ENCODE measurements at regions of chr9 and their contacts with region 1.

Region 1: GRCh38 chr9:124852829-124853531 is at the start of gene WDR38:
- DNase-seq: peak; percentile 80
- H3K4me3 Mint-ChIP-seq: peak within 1 kb of the TSS; percentile 54
- H3K27ac Mint-ChIP-seq: no peak within 1 kb of the TSS
- H3K4me1 Mint-ChIP-seq: peaks cover 6% of the 10 kb centered on the region
- H3K27me3 Mint-ChIP-seq: no peaks in the 10 kb centered on the region
- CTCF ChIP-seq: peak; percentile 99
- total RNA-seq, gene WDR38: not detected in 2 replicates

Region 2: GRCh38 chr9:124764774-124765438 is 88.1 kb before region 1 on chr9:
- CTCF ChIA-PET with region 1: interaction called, 927 read pairs
- POLR2A ChIA-PET with region 1: interaction called, 299 read pairs
- intact Hi-C with region 1: no loop called
- DNase-seq: peak; percentile 35
- H3K4me3 Mint-ChIP-seq: no peak overlapping the region
- H3K27ac Mint-ChIP-seq: no peak overlapping the region
- H3K4me1 Mint-ChIP-seq: peaks cover 11% of the 10 kb centered on the region
- H3K27me3 Mint-ChIP-seq: no peaks in the 10 kb centered on the region
- CTCF ChIP-seq: peak; percentile 37

Region 3: GRCh38 chr9:124794902-124795491 is 58.0 kb before region 1 on chr9:
- CTCF ChIA-PET with region 1: interaction called, 64 read pairs
- POLR2A ChIA-PET with region 1: interaction called, 5 read pairs
- intact Hi-C with region 1: no loop called
- DNase-seq: peak; percentile 49
- H3K4me3 Mint-ChIP-seq: no peak overlapping the region
- H3K27ac Mint-ChIP-seq: no peak overlapping the region
- H3K4me1 Mint-ChIP-seq: peaks cover 5% of the 10 kb centered on the region
- H3K27me3 Mint-ChIP-seq: no peaks in the 10 kb centered on the region
- CTCF ChIP-seq: no peak

Region 4: DNA sequence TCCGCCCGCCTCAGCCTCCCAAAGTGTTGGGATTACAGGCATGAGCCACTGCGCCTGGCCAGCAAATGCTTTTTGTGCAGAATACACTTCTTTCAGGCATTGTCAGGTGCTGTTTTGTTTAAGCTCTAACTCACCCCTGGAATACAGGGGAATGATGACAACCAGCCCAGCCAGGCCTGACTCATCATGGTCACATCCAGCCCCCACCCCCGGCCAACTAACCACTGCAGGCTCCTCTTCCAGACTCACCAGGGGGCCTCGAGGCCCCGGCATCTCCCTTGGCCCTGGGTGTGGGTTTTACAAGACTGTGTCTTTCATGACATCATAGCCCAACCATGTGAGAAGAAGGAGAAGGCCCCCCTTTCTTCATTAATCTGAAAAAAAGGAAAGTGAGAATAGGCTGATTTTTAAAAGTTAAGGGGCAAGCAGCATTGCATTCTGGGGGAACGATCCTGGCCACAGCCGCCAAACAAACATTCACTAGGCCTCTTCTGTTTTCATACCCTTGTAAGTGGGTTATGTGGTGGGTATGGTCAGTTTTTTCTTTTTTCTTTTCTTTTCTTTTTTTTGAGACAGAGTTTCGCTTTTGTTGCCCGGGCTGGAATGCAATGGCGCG is 40.5 kb before region 1 on chr9:
- CTCF ChIA-PET with region 1: interaction called, 50 read pairs
- POLR2A ChIA-PET with region 1: interaction called, 11 read pairs
- intact Hi-C with region 1: loop called (anchors 5 kb)
- DNase-seq: peak; percentile 88
- H3K4me3 Mint-ChIP-seq: no peak overlapping the region
- H3K27ac Mint-ChIP-seq: peak overlapping the region; percentile 46
- H3K4me1 Mint-ChIP-seq: peaks cover 31% of the 10 kb centered on the region
- H3K27me3 Mint-ChIP-seq: no peaks in the 10 kb centered on the region
- CTCF ChIP-seq: no peak

Region 5: DNA sequence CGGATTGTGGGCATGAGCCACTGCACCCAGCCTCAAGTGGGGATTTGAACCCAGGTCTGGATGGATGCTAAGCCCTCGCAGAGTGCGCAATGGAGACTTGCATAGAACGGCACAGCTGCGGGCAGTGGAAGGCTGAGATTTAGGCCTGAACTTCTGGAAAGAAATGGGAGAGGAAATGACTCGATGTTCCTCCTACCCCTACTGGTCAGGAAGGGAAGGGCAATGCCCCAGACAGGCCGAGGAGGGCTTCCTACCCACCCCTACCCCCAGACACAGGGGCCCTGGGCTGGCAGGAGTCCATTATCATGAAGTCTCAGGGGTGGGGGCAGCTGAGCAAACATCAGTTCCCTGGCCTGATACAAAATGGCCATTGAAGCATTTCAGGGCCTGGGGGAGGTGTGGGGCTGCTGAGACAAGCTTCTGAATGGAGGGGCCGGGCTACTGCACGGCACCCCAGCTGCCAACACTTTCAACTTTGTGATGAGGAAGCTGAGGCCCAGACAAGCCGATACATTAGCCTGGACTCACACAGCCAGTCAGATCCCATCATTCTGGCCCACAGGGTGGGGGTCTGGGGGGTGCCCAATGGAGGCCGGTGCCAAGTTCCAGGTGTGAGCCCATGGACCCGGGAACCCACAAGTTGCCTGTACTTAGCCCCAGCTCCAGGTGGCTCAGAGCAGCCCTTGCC is 13.2 kb before region 1 on chr9:
- CTCF ChIA-PET with region 1: interaction called, 159 read pairs
- POLR2A ChIA-PET with region 1: interaction called, 7 read pairs
- intact Hi-C with region 1: no loop called
- DNase-seq: no peak
- H3K4me3 Mint-ChIP-seq: no peak overlapping the region
- H3K27ac Mint-ChIP-seq: no peak overlapping the region
- H3K4me1 Mint-ChIP-seq: peaks cover 11% of the 10 kb centered on the region
- H3K27me3 Mint-ChIP-seq: no peaks in the 10 kb centered on the region
- CTCF ChIP-seq: peak; percentile 27

Region 6: DNA sequence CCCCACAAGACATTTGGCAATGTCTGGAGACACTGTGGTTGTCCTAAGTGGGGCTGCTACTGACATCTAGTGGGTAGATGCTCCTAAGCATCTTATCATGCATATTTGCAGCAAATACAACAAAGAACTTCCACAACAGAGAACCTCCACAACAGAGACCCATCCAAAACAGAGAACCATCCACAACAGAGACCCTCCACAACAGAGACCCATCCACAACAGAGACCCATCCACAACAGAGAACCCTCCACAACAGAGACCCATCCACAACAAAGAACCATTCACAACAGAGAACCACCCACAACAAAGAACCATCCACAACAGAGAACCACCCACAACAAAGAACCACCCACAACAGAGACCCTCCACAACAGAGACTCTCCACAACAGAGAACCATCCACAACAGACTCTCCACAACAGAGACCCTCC is 41.8 kb after region 1 on chr9:
- CTCF ChIA-PET with region 1: interaction called, 16 read pairs
- POLR2A ChIA-PET with region 1: interaction called, 6 read pairs
- intact Hi-C with region 1: loop called (anchors 1 kb)
- DNase-seq: peak; percentile 54
- H3K4me3 Mint-ChIP-seq: no peak overlapping the region
- H3K27ac Mint-ChIP-seq: peak overlapping the region; percentile 74
- H3K4me1 Mint-ChIP-seq: peaks cover 5% of the 10 kb centered on the region
- H3K27me3 Mint-ChIP-seq: no peaks in the 10 kb centered on the region
- CTCF ChIP-seq: peak; percentile 47

Region 7: GRCh38 chr9:124960409-124960752 is 107.4 kb after region 1 on chr9:
- CTCF ChIA-PET with region 1: no interaction called
- POLR2A ChIA-PET with region 1: no interaction called
- intact Hi-C with region 1: no loop called
- DNase-seq: peak; percentile 11
- H3K4me3 Mint-ChIP-seq: no peak overlapping the region
- H3K27ac Mint-ChIP-seq: no peak overlapping the region
- H3K4me1 Mint-ChIP-seq: no peaks in the 10 kb centered on the region
- H3K27me3 Mint-ChIP-seq: no peaks in the 10 kb centered on the region
- CTCF ChIP-seq: no peak